ENCODE measurements at regions of chr15 and their contacts with region 1.

Region 1: GRCh38 chr15:31326156-31326732 is 391 bp upstream of the KLF13 start:
- DNase-seq: peak; percentile 100
- ATAC-seq: peak; percentile 73
- H3K4me3 Mint-ChIP-seq: peak overlapping the region; percentile 93
- H3K27ac Mint-ChIP-seq: peak overlapping the region; percentile 86
- H3K4me1 Mint-ChIP-seq: peaks cover 62% of the 10 kb centered on the region
- H3K27me3 Mint-ChIP-seq: no peaks in the 10 kb centered on the region
- CTCF ChIP-seq: no peak

Region 2: DNA sequence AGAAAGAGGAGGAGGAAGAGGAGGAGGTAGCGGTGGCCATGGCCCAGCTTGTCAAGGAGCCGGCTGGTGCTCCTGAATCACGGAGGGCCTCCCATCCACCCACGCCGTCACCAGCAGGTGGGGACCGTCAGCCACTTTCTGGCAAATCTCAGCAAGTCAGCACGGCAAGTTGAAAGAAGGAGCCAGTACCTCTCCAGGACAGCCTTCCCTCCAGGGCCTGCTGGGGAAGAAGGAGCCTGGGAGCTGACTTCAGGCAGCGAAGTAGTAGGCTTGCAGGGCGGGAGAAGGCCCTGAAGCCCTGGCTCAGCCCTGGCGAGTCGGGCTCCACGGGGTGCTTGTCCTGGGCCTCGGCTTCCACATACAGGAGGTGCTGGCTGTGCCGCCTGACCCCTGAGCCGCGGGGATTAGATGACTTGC is 125.5 kb before region 1 on chr15:
- CTCF ChIA-PET with region 1: interaction called, 4 read pairs
- POLR2A ChIA-PET with region 1: interaction called, 12 read pairs
- intact Hi-C with region 1: no loop called
- DNase-seq: peak; percentile 42
- ATAC-seq: peak; percentile 45
- H3K4me3 Mint-ChIP-seq: no peak overlapping the region
- H3K27ac Mint-ChIP-seq: no peak overlapping the region
- H3K4me1 Mint-ChIP-seq: peaks cover 29% of the 10 kb centered on the region
- H3K27me3 Mint-ChIP-seq: no peaks in the 10 kb centered on the region
- CTCF ChIP-seq: no peak

Region 3: GRCh38 chr15:31254431-31255175 is 71.6 kb before region 1 on chr15:
- CTCF ChIA-PET with region 1: interaction called, 3 read pairs
- POLR2A ChIA-PET with region 1: interaction called, 33 read pairs
- intact Hi-C with region 1: no loop called
- DNase-seq: no peak
- ATAC-seq: no peak
- H3K4me3 Mint-ChIP-seq: no peak overlapping the region
- H3K27ac Mint-ChIP-seq: peak overlapping the region; percentile 77
- H3K4me1 Mint-ChIP-seq: peaks cover 44% of the 10 kb centered on the region
- H3K27me3 Mint-ChIP-seq: no peaks in the 10 kb centered on the region
- CTCF ChIP-seq: no peak

Region 4: GRCh38 chr15:31344823-31345605 is 18.8 kb after region 1 on chr15:
- CTCF ChIA-PET with region 1: interaction called, 3 read pairs
- POLR2A ChIA-PET with region 1: interaction called, 94 read pairs
- intact Hi-C with region 1: loop called (anchors 1 kb)
- DNase-seq: peak; percentile 41
- ATAC-seq: peak; percentile 67
- H3K4me3 Mint-ChIP-seq: peak overlapping the region; percentile 88
- H3K27ac Mint-ChIP-seq: peak overlapping the region; percentile 91
- H3K4me1 Mint-ChIP-seq: peaks cover 100% of the 10 kb centered on the region
- H3K27me3 Mint-ChIP-seq: no peaks in the 10 kb centered on the region
- CTCF ChIP-seq: no peak

Region 5: GRCh38 chr15:31435261-31435911 is 109.1 kb after region 1 on chr15:
- CTCF ChIA-PET with region 1: interaction called, 9 read pairs
- POLR2A ChIA-PET with region 1: interaction called, 125 read pairs
- intact Hi-C with region 1: loop called (anchors 1 kb)
- DNase-seq: no peak
- ATAC-seq: peak; percentile 66
- H3K4me3 Mint-ChIP-seq: peak overlapping the region; percentile 80
- H3K27ac Mint-ChIP-seq: peak overlapping the region; percentile 91
- H3K4me1 Mint-ChIP-seq: peaks cover 64% of the 10 kb centered on the region
- H3K27me3 Mint-ChIP-seq: no peaks in the 10 kb centered on the region
- CTCF ChIP-seq: no peak

Region 6: DNA sequence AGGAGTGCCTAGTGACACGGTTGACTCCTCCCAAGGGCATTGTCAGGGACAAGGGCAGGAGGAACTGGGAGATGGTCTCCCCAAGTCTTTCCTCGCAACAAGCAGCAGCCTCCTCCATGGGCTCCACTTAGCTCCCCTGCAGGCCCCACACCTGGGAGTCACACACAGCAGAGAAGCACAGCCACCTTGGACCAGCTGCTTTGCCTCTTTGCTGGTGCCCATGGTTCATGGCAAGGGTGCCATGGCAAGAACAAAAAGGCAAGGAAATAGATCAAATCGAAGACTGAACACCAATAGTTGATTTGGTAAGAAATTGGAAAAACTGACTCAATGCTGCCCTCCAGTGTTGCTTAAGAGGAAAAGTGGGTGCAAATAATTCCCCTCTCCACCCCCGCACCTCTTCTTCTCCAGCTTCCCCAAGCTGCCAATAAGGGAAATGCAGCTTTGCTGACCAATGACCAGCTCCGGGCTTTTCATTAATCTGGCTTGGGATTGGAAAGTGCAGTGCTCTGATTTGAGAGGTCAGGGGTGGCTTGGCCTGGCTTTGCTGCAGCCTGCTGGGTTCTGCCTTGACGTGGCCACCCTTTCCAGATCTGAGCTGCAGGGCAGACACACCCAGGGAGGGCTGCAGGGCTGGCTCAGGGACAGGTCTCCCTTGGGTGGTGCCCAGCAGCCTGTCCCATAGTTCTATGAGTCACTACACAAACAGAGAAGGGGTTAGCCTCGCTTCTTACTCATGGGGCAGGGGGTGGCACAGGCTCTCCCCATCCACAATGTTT is 162.4 kb after region 1 on chr15:
- CTCF ChIA-PET with region 1: interaction called, 11 read pairs
- POLR2A ChIA-PET with region 1: interaction called, 30 read pairs
- intact Hi-C with region 1: loop called (anchors 1 kb)
- DNase-seq: no peak
- ATAC-seq: peak; percentile 69
- H3K4me3 Mint-ChIP-seq: no peak overlapping the region
- H3K27ac Mint-ChIP-seq: no peak overlapping the region
- H3K4me1 Mint-ChIP-seq: peaks cover 22% of the 10 kb centered on the region
- H3K27me3 Mint-ChIP-seq: peaks cover 8% of the 10 kb centered on the region
- CTCF ChIP-seq: peak; percentile 24

Measured in activated B cell treated with CpG ODN at 0.5 μM for 24 hours (primary cell).